MCF 10A (cell line): ENCODE measurements at regions of chr6 and their contacts with region 1.

Region 1: GRCh38 chr6:79869600-79870084 is 77.7 kb downstream of the ELOVL4 start:
- DNase-seq: peak; percentile 79
- H3K4me3 Mint-ChIP-seq: peak overlapping the region; percentile 21
- H3K27ac Mint-ChIP-seq: peak overlapping the region; percentile 51
- H3K4me1 Mint-ChIP-seq: peaks cover 24% of the 10 kb centered on the region
- H3K27me3 Mint-ChIP-seq: no peaks in the 10 kb centered on the region
- CTCF ChIP-seq: peak; percentile 82

Region 2: GRCh38 chr6:79777713-79778579 is 91.7 kb before region 1 on chr6:
- CTCF ChIA-PET with region 1: interaction called, 71 read pairs
- POLR2A ChIA-PET with region 1: no interaction called
- intact Hi-C with region 1: loop called (anchors 1 kb)
- DNase-seq: peak; percentile 81
- H3K4me3 Mint-ChIP-seq: peak overlapping the region; percentile 63
- H3K27ac Mint-ChIP-seq: no peak overlapping the region
- H3K4me1 Mint-ChIP-seq: no peaks in the 10 kb centered on the region
- H3K27me3 Mint-ChIP-seq: no peaks in the 10 kb centered on the region
- CTCF ChIP-seq: peak; percentile 96

Region 3: GRCh38 chr6:79813854-79814709 is 55.6 kb before region 1 on chr6:
- CTCF ChIA-PET with region 1: interaction called, 32 read pairs
- POLR2A ChIA-PET with region 1: interaction called, 3 read pairs
- intact Hi-C with region 1: no loop called
- DNase-seq: peak; percentile 79
- H3K4me3 Mint-ChIP-seq: no peak overlapping the region
- H3K27ac Mint-ChIP-seq: no peak overlapping the region
- H3K4me1 Mint-ChIP-seq: no peaks in the 10 kb centered on the region
- H3K27me3 Mint-ChIP-seq: no peaks in the 10 kb centered on the region
- CTCF ChIP-seq: peak; percentile 77

Region 4: GRCh38 chr6:79898076-79898475 is 28.4 kb after region 1 on chr6:
- CTCF ChIA-PET with region 1: interaction called, 11 read pairs
- POLR2A ChIA-PET with region 1: interaction called, 4 read pairs
- intact Hi-C with region 1: no loop called
- DNase-seq: no peak
- H3K4me3 Mint-ChIP-seq: no peak overlapping the region
- H3K27ac Mint-ChIP-seq: no peak overlapping the region
- H3K4me1 Mint-ChIP-seq: peaks cover 23% of the 10 kb centered on the region
- H3K27me3 Mint-ChIP-seq: no peaks in the 10 kb centered on the region
- CTCF ChIP-seq: no peak

Region 5: GRCh38 chr6:80004173-80005072 is 134.8 kb after region 1 on chr6 and contains the start of gene TTK:
- CTCF ChIA-PET with region 1: interaction called, 3 read pairs
- POLR2A ChIA-PET with region 1: interaction called, 3 read pairs
- intact Hi-C with region 1: loop called (anchors 2 kb)
- DNase-seq: peak; percentile 96
- H3K4me3 Mint-ChIP-seq: peak within 1 kb of the TSS; percentile 96
- H3K27ac Mint-ChIP-seq: peak within 1 kb of the TSS; percentile 78
- H3K4me1 Mint-ChIP-seq: peaks cover 40% of the 10 kb centered on the region
- H3K27me3 Mint-ChIP-seq: no peaks in the 10 kb centered on the region
- CTCF ChIP-seq: no peak
- total RNA-seq, gene TTK: 11.9 and 19.1 TPM in 2 replicates

Region 6: DNA sequence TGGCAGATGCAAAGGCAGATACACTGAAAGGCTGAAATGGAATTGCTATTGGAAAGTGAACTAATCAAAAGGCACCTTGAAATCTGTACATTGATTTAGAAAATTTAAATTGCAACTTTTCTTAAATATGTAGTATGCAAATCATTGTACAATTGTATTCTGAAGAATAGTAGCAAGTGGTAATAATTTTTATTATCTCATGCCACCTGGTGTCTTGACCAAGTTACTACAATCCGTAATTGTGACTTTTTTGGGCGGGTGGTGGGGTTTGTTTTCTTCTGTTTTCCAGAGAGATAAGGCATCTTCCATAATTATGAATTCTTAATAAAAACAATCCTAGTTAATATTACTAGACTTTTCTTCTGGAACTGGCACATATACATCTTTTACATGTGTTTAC is 224.4 kb after region 1 on chr6:
- CTCF ChIA-PET with region 1: interaction called, 31 read pairs
- POLR2A ChIA-PET with region 1: interaction called, 3 read pairs
- intact Hi-C with region 1: loop called (anchors 2 kb)
- DNase-seq: peak; percentile 36
- H3K4me3 Mint-ChIP-seq: no peak overlapping the region
- H3K27ac Mint-ChIP-seq: no peak overlapping the region
- H3K4me1 Mint-ChIP-seq: no peaks in the 10 kb centered on the region
- H3K27me3 Mint-ChIP-seq: peaks cover 10% of the 10 kb centered on the region
- CTCF ChIP-seq: peak; percentile 55

Region 7: DNA sequence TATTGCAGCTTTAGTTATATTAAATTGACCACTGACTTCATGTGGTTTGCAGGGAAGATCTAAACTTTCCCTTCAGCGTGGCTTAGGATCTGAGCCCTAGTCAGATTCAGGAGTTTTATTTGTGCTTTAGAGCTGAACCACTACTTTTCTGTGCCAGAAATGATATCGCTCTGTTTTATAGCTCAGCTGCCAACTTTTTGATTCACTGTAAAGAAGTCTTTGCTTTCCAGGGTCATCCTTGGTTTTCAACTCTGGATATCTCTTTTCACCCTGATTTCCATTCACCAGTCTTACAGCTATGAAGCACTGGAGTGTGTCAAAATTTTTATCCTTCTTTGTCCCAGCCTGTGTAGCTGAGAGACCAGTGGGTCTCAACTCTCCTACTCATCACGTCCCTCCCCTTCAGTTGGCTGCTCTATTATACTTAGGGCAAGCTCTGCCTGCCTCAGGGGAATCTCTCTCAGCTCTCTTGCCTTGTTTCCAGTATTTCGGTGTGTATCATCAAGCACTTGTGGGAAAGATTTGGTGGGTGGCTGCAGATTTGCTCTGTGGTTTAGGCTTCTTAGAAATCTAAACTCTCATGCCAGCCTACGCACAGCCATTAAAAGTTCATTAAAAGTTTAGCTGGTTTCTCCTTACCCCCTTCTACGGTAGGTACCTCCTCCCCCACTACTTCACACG is 1457.4 kb after region 1 on chr6:
- CTCF ChIA-PET with region 1: no interaction called
- POLR2A ChIA-PET with region 1: no interaction called
- intact Hi-C with region 1: no loop called
- DNase-seq: no peak
- H3K4me3 Mint-ChIP-seq: no peak overlapping the region
- H3K27ac Mint-ChIP-seq: no peak overlapping the region
- H3K4me1 Mint-ChIP-seq: no peaks in the 10 kb centered on the region
- H3K27me3 Mint-ChIP-seq: no peaks in the 10 kb centered on the region
- CTCF ChIP-seq: no peak